Ovary (tissue), 10 donors: ENCODE measurements at regions of chr15 and their contacts with region 1.

Region 1: GRCh38 chr15:83815506-83815905 is 161.6 kb downstream of the ADAMTSL3 start:
- DNase-seq: no peak
- H3K4me3 ChIP-seq: no peak overlapping the region
- H3K27ac ChIP-seq: no peak overlapping the region
- H3K4me1 ChIP-seq: no peaks in the 10 kb centered on the region
- H3K27me3 ChIP-seq: no peaks in the 10 kb centered on the region
- CTCF ChIP-seq: no peak
- EP300 ChIP-seq: no peak
- POLR2A ChIP-seq: no peak

Region 2: DNA sequence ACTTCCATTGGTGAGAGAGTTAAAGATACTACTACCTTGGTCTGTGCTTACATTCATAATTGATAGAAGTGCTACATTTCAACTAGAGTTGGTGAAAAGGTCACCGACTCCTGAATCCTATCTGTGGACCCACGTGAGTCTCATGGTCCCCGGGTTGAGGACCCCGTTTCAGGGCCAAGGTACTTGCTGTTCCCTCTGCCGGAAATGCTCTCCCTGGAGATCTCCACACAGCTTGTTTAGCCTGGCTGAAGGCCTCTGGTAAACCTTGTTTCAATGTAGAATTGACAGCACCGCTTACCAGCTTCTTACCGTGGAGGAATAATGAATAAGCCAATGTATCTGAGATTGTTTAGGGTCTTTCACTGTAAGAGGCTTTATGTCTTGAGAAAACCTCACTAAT is 194.1 kb after region 1 on chr15:
- intact Hi-C with region 1: loop called in 1 of 4 experiments (anchors 10 kb)
- DNase-seq: no peak
- H3K4me3 ChIP-seq: no peak overlapping the region
- H3K27ac ChIP-seq: no peak overlapping the region
- H3K4me1 ChIP-seq: peaks cover 4% of the 10 kb centered on the region
- H3K27me3 ChIP-seq: no peaks in the 10 kb centered on the region
- CTCF ChIP-seq: no peak
- EP300 ChIP-seq: no peak
- POLR2A ChIP-seq: no peak